Right lobe of liver (tissue), 6 donors: ENCODE measurements at regions of chr3 and their contacts with region 1.

Region 1: DNA sequence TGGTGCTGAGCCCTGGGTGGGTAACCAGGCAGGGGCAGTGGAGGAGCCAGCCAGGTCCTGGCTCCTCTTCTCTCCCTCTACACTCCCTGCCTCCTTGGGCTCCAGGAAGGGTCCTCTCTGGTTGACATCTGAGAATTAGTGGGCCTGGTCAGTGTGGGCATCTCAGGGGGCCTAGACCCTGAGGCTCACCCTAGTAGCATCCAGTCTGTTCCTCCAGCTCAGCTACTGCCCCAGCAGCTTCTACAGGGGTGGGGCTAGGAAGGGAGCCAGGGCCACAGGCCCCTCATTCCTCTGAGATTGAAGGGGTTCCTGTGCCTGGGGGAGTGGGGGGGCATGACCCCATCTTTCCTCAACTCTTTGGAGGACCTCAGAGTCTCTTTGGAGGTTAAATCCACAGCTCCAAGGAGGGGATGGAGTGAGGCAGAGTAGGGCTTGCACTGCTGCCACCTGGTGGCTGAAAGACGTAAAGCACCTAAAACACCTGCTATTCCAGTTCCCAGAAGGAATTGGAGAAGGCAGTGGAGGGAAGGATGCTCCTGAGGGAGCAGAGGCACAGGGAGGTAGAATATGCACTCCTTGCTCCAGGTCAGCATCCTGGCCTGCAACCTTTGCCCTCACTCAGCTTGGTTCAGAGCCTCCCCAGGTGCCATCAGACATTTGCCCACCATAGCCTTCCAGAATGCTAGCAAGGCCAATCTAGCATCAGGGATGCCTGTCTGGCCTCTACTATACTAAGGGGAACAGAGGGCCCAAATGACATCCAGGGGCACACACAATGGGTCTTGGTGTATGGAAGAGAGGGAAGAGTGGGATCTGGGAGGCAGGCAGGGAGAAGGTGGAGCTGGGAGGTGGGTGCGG is 25.1 kb downstream of the C3orf18 start:
- DNase-seq: peak in 2 of 3 donors; percentile 52 to 68
- ATAC-seq: peak; percentile 77 to 94 (median 86)
- H3K4me3 ChIP-seq: no peak overlapping the region
- H3K27ac ChIP-seq: no peak overlapping the region
- H3K4me1 ChIP-seq: no peaks in the 10 kb centered on the region
- H3K27me3 ChIP-seq: no peaks in the 10 kb centered on the region
- CTCF ChIP-seq: peak; percentile 83 to 91 (median 88)
- POLR2A ChIP-seq: no peak

Region 2: GRCh38 chr3:50347194-50347918 is 195.1 kb before region 1 on chr3:
- intact Hi-C with region 1: loop called in 1 of 2 experiments (anchors 10 kb)
- DNase-seq: peak in 2 of 3 donors; percentile 72 to 75
- ATAC-seq: peak; percentile 7 to 29 (median 26)
- H3K4me3 ChIP-seq: no peak overlapping the region
- H3K27ac ChIP-seq: no peak overlapping the region
- H3K4me1 ChIP-seq: peaks cover 0 to 31% (median 7%) of the 10 kb centered on the region in 4 donors
- H3K27me3 ChIP-seq: no peaks in the 10 kb centered on the region
- CTCF ChIP-seq: peak; percentile 43 to 65 (median 56)
- POLR2A ChIP-seq: no peak

Region 3: GRCh38 chr3:50436114-50436674 is 106.2 kb before region 1 on chr3:
- intact Hi-C with region 1: loop called (anchors 2 to 5 kb)
- DNase-seq: peak; percentile 64 to 81 (median 78)
- ATAC-seq: peak; percentile 85 to 96 (median 90)
- H3K4me3 ChIP-seq: no peak overlapping the region
- H3K27ac ChIP-seq: no peak overlapping the region
- H3K4me1 ChIP-seq: no peaks in the 10 kb centered on the region
- H3K27me3 ChIP-seq: no peaks in the 10 kb centered on the region
- CTCF ChIP-seq: peak; percentile 88 to 98 (median 96)
- POLR2A ChIP-seq: no peak

Region 4: DNA sequence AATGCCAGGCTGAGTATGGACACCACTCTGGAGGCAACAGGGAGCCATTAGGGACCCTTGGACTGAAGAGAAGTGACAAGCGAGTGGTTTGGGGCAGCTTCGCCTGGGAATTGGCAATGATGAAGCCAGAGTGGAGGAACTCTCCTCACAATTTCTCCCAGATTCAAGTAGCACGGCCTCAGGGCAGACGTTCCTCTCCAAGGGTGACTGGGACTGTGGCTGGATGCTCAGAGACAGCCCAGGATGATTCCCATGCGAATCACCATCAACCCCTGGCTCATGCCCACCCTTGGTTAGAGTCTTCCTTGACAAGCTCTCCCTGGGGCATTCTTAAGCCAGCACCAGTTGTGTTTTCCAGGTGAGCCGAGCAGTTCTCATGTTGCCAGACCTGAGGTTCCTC is 116.0 kb after region 1 on chr3:
- intact Hi-C with region 1: no loop called
- DNase-seq: peak in 2 of 3 donors; percentile 12 to 15
- ATAC-seq: no peak
- H3K4me3 ChIP-seq: no peak overlapping the region
- H3K27ac ChIP-seq: no peak overlapping the region
- H3K4me1 ChIP-seq: no peaks in the 10 kb centered on the region
- H3K27me3 ChIP-seq: no peaks in the 10 kb centered on the region
- CTCF ChIP-seq: no peak
- POLR2A ChIP-seq: no peak